Left ventricle myocardium inferior (tissue), 1 donor: ENCODE measurements at regions of chr11 and their contacts with region 1.

Region 1: DNA sequence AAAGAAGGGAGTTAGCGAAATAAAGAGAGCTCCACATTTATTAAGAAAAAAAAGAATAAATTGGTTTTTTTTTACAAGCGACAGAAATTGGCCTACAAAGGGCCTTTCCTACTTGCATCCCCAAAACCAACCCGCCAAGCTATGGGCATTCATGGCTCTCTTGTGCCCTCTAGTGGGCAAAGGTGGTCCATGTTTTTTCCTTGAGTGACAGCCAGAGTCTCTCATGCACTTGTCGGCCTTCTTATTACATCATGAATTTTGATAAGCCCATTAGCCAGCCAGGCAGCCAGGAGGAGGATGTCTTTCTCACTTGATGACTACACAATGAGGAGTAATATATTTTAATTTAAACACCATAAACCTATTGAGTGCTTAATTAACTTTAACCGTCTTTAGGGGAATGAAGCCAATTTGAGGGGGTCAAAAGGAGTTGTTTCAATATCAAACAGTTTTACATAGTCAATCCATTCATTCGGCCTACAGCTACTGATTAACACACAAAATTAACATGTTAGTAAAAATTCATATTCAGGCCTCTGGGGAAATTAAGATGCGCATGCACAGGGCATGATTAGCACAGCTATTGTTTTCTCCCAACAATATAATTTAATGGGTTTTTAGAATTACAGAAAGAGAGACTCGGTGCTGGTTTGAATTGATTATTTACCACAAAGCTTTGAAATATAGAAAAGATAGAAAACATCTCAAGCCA is 85.5 kb downstream of the RCN1 start:
- DNase-seq: peak; percentile 46
- H3K4me3 ChIP-seq: no peak overlapping the region
- H3K27ac ChIP-seq: no peak overlapping the region
- H3K4me1 ChIP-seq: peaks cover 14% of the 10 kb centered on the region
- H3K27me3 ChIP-seq: peaks cover 25% of the 10 kb centered on the region
- CTCF ChIP-seq: peak; percentile 91

Region 2: GRCh38 chr11:32050264-32050663 is 126.1 kb before region 1 on chr11:
- intact Hi-C with region 1: loop called (anchors 2 kb)
- DNase-seq: no peak
- H3K4me3 ChIP-seq: no peak overlapping the region
- H3K27ac ChIP-seq: no peak overlapping the region
- H3K4me1 ChIP-seq: no peaks in the 10 kb centered on the region
- H3K27me3 ChIP-seq: peaks cover 63% of the 10 kb centered on the region
- CTCF ChIP-seq: no peak

Region 3: DNA sequence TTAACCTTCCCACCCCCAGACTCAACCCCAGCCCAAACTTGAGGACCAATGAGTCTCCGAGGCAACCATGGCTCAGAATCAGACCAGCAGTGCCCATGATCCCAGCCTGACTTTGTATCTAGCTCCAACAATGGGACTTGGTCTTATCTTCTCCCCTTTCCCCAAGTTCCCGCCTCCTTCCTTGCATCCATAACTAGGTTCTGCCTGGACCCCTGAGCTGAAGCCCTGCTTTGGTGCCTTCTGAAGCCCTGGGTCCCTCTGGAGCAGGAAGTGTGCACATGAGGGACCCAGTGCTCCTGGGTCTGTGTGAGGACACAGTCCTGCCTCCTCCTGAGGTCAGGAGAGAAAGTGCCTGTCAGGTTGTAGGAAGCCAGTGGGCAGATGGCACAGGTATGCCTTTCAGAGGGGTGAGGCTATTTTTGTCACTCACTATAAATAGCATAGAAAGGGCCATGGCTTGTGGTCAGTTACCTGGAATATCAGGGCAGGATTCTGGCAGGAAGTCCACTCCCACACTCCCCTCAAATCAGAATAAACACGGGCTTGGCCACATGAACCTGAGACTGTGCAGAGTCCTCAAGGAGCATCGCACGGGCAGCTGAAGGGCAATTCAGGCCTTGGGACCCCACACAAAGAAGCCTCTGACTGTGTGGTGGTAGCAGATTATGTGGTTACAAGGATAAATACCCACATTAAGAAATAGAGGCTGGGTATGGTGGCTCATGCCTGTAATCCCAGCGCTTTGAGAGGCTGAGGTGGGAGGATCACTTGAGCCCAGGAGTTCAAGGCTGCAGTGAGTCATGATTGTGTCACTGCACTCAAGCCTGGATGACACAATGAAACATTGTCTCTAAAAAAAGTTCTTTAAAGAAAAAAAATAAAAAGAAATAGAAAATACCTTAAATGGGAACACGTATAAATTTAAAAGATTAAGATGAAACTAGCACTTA is 58.1 kb before region 1 on chr11:
- intact Hi-C with region 1: no loop called
- DNase-seq: no peak
- H3K4me3 ChIP-seq: no peak overlapping the region
- H3K27ac ChIP-seq: no peak overlapping the region
- H3K4me1 ChIP-seq: no peaks in the 10 kb centered on the region
- H3K27me3 ChIP-seq: no peaks in the 10 kb centered on the region
- CTCF ChIP-seq: no peak